ENCODE measurements at regions of chr16 and their contacts with region 1.

Region 1: DNA sequence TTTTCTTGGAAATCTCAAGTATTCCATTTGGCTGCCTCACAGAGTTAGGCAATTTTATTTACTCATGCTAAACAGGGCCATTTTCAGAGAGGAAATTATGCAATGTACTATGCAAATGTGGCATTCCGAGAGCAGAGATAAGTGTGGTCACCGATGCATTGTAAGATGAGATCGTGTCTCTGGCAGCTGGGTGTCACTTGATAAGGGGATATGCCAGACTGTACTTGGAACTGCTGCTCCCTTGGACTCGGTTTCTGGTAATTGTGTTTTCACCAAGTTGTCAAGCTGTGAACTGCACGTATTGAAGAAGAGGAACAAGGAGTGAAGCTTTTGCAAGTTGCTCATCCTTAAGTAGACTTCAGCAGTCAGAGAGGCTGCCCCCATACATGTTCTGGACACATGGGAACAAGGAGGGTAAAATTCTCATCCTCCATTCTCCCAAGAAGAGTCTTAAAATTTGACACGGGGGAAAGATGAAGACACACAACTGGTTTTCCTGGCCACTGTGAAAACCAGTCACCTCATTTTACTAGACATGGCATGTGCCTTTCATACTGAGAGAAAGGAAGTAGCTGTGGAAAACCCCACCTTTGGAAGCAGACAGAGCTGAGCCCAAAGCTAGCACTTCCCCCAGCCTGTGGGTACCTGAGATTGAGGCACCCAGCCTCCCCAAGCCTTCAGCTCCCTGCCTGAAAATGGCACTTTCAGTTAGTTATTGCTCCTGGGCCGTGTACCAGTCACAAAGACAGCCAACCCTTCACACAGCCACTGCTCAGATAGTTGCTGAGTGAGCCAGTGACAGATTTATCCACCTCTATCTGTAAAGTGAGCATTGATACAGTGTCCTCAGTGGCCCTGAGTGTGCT is 150.7 kb downstream of the SOCS1 start:
- DNase-seq: no peak
- ATAC-seq: peak; percentile 77
- H3K4me3 Mint-ChIP-seq: peak overlapping the region; percentile 72
- H3K27ac Mint-ChIP-seq: peak overlapping the region; percentile 89
- H3K4me1 Mint-ChIP-seq: peaks cover 71% of the 10 kb centered on the region
- H3K27me3 Mint-ChIP-seq: no peaks in the 10 kb centered on the region

Region 2: DNA sequence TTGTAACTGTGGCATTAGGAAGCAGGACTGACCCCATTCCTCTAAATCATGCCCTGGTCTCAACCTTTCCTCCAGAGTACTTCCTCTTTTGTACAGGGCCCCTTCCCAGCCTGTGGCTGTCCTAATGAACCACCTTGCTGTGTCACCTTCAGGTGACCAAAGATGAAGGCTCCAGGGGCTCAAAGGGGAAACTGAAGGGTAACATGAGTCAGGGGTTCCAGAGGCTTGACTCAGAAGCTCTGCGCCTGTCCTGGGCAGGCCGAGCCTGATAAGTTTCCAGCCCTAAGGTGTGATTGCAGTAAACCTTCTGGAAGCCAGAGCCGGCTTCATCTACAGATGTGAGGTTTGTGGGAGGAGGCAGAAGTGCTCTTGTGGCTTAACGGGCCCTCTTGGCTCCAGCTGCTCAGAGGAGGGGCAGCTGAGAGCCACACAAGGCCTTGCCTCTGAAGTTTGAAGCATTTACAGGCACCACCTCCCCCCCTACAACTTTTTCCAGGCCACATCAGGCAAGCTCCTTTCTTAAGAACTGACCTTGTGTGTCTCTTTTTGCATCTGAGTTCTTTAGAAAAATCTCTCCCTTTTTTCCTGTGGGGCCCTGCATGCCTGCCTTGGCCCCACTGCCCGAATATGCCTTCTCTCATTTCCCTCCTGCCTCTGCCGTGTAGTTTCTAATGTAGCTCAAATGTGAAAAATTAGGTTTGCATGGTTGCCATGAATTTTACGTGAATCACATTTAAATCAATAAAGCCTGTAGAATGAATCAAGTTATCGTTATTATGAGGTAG is 11.0 kb before region 1 on chr16:
- POLR2A ChIA-PET with region 1: interaction called, 24 read pairs
- DNase-seq: peak; percentile 67
- ATAC-seq: peak; percentile 84
- H3K4me3 Mint-ChIP-seq: peak overlapping the region; percentile 61
- H3K27ac Mint-ChIP-seq: peak overlapping the region; percentile 94
- H3K4me1 Mint-ChIP-seq: peaks cover 60% of the 10 kb centered on the region
- H3K27me3 Mint-ChIP-seq: no peaks in the 10 kb centered on the region

Region 3: DNA sequence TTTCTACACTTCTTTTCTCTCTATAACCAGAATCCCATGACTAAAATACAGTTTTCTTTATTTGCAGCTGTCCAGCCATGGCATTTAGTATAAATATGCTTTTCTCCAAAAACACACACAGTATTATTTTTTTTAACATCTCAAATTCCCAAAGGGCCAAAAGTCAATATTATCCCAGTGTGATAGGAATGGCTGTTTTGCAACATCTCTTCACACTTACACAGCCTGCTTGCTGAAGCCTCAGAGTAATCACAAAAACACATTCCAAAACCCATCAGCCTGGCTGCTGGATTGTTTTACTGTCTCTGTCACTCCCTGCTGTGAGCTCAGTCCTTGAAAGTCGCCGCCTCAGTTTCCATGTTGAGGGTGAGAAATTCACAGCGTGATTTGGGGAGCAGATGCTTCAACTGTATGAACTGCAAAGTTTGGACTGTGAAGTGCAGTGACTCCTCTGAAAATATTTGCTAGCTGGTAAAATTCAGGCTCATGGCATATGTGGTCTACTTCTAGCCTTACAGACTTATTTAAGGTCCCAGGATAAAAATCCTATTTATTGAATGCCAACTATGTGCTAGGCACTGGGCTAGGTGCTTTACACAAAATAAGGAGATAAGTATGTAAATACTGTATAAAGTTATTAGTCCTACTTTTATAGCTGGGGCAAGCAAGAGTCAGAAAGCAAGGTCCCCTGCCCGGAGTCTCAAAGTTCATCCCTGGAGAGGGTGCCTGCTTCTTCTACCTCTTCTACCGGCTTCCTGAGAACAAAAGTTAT is 34.2 kb after region 1 on chr16:
- POLR2A ChIA-PET with region 1: interaction called, 17 read pairs
- DNase-seq: no peak
- ATAC-seq: no peak
- H3K4me3 Mint-ChIP-seq: peak overlapping the region; percentile 37
- H3K27ac Mint-ChIP-seq: peak overlapping the region; percentile 93
- H3K4me1 Mint-ChIP-seq: peaks cover 78% of the 10 kb centered on the region
- H3K27me3 Mint-ChIP-seq: no peaks in the 10 kb centered on the region

Measured in activated naive CD8-positive, alpha-beta T cell treated with anti-CD3 and anti-CD28 coated beads, Interleukin-2, amount 10 ng/mL, durations not matched to agents 7 days and 5 days (primary cell).